ENCODE measurements at regions of chr7 and their contacts with region 1.

Region 1: GRCh38 chr7:56033671-56034432 is 17.4 kb downstream of the PSPH start:
- DNase-seq: peak; percentile 68
- H3K4me3 ChIP-seq: peak overlapping the region; percentile 63 to 65 (median 64)
- H3K27ac ChIP-seq: peak overlapping the region; percentile 64
- H3K4me1 ChIP-seq: no peaks in the 10 kb centered on the region
- H3K27me3 ChIP-seq: no peaks in the 10 kb centered on the region
- CTCF ChIP-seq: peak; percentile 9 to 50

Region 2: GRCh38 chr7:56003749-56004148 is 30.1 kb before region 1 on chr7:
- CTCF ChIA-PET with region 1: no interaction called
- dilution Hi-C with region 1: no loop called
- in situ Hi-C with region 1: no loop called
- intact Hi-C with region 1: loop called (anchors 2 kb)
- DNase-seq: no peak
- H3K4me3 ChIP-seq: no peak overlapping the region
- H3K27ac ChIP-seq: no peak overlapping the region
- H3K4me1 ChIP-seq: peaks cover 6% of the 10 kb centered on the region
- H3K27me3 ChIP-seq: no peaks in the 10 kb centered on the region
- CTCF ChIP-seq: no peak